ENCODE measurements at regions of chr13 and their contacts with region 1.

Region 1: DNA sequence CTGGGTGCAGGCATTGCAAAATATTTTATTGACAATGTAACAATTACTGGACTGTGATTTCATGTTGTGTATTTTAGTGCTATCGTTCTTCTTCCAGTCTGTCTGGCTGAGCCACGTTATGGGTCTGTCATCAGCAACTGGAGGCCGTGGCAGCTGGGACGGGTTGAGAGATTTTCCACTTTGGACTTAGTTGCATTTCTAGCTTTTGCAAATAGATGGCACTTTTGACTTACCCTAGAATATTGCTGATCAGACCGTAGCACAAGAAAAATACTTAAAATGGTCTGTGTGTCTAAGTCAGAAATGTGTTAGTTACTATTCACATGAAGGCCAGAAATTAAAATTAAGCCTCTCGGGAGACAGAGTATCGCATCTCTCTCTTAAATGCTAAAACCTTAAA is 211.1 kb downstream of the TEX29 start:
- DNase-seq: peak in 5 of 10 donors; percentile 19 to 46 (median 44)
- H3K4me3 ChIP-seq: no peak overlapping the region
- H3K27ac ChIP-seq: peak overlapping the region in 1 of 59 donors; percentile 18
- H3K27me3 ChIP-seq: peaks cover 0 to 50% (median 16%) of the 10 kb centered on the region in 45 donors
- CTCF ChIP-seq: peak; percentile 23 to 75 (median 55)

Region 2: GRCh38 chr13:111572956-111573761 is 41.7 kb after region 1 on chr13:
- intact Hi-C with region 1: no loop called
- DNase-seq: no peak
- H3K4me3 ChIP-seq: no peak overlapping the region
- H3K27ac ChIP-seq: no peak overlapping the region
- H3K27me3 ChIP-seq: no peaks in the 10 kb centered on the region
- CTCF ChIP-seq: no peak

Region 3: GRCh38 chr13:111590796-111591195 is 59.3 kb after region 1 on chr13:
- intact Hi-C with region 1: no loop called
- DNase-seq: no peak
- H3K4me3 ChIP-seq: no peak overlapping the region
- H3K27ac ChIP-seq: no peak overlapping the region
- H3K27me3 ChIP-seq: peaks cover 0 to 10% (median 0%) of the 10 kb centered on the region in 45 donors
- CTCF ChIP-seq: no peak

Region 4: GRCh38 chr13:111937777-111938311 is 406.3 kb after region 1 on chr13:
- intact Hi-C with region 1: no loop called
- DNase-seq: peak in 4 of 10 donors; percentile 8 to 28 (median 20)
- H3K4me3 ChIP-seq: no peak overlapping the region
- H3K27ac ChIP-seq: no peak overlapping the region
- H3K27me3 ChIP-seq: peaks cover 0 to 18% (median 0%) of the 10 kb centered on the region in 45 donors
- CTCF ChIP-seq: no peak

Region 5: GRCh38 chr13:112042495-112042894 is 511.0 kb after region 1 on chr13:
- intact Hi-C with region 1: no loop called
- DNase-seq: no peak
- H3K4me3 ChIP-seq: no peak overlapping the region
- H3K27ac ChIP-seq: no peak overlapping the region
- H3K27me3 ChIP-seq: peaks cover 0 to 25% (median 0%) of the 10 kb centered on the region in 45 donors
- CTCF ChIP-seq: no peak

Region 6: DNA sequence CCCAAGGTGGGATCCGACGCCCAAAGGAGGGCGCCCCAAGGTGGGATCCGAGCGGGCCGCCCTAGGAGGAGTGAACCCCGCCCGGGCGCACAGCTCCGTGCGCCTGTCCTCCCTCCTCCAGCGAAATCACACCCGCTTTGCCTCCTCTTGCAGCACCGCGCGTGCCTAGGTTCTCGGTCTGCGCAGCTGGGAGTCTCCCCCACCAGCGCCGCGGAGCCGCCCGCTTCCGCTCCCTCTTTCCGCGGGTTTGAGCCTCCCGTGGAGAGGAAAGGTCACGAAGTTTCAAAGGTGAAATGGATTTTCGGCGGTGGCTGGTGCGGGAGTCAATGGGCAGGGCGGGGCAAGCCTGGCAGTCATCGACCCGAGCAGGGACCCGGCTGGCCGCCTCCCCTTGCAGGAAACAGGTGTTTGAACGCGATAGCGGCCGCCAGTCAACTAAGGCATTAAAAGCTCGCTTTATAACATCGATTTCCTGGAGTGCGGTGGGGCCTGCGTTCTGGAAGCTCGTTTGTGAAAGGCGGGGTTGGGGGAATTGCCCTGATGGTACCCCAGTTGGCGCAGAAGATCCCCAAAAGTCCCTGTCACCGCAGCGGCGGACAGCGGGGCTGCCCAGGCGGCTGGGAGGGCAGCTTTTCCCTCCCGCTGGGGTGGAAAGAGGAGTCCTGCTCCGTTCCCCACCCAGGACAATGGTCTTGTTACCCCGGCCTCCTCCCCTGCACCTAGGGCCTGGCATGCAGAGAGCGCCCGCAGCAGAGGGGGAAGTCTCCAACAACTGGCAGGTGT is 526.4 kb after region 1 on chr13:
- intact Hi-C with region 1: loop called in 1 of 2 experiments (anchors 10 kb)
- DNase-seq: no peak
- H3K4me3 ChIP-seq: peak overlapping the region in 56 of 59 donors; percentile 0 to 68 (median 48)
- H3K27ac ChIP-seq: peak overlapping the region in 28 of 59 donors; percentile 8 to 68 (median 40)
- H3K27me3 ChIP-seq: peaks cover 0 to 100% (median 96%) of the 10 kb centered on the region in 45 donors
- CTCF ChIP-seq: no peak

Region 7: GRCh38 chr13:112072531-112073244 is 541.2 kb after region 1 on chr13:
- intact Hi-C with region 1: loop called in 1 of 2 experiments (anchors 10 kb)
- DNase-seq: no peak
- H3K4me3 ChIP-seq: peak overlapping the region; percentile 1 to 63 (median 43)
- H3K27ac ChIP-seq: peak overlapping the region in 53 of 59 donors; percentile 5 to 89 (median 75)
- H3K27me3 ChIP-seq: peaks cover 3 to 95% (median 82%) of the 10 kb centered on the region in 45 donors
- CTCF ChIP-seq: no peak

Region 8: GRCh38 chr13:112443995-112444860 is 912.7 kb after region 1 on chr13:
- intact Hi-C with region 1: loop called (anchors 2 to 5 kb)
- DNase-seq: peak in 9 of 10 donors; percentile 25 to 82 (median 68)
- H3K4me3 ChIP-seq: no peak overlapping the region
- H3K27ac ChIP-seq: no peak overlapping the region
- H3K27me3 ChIP-seq: peaks cover 0 to 54% (median 19%) of the 10 kb centered on the region in 45 donors
- CTCF ChIP-seq: peak; percentile 63 to 94 (median 85)

Measured in dorsolateral prefrontal cortex (tissue), 120 donors.